Dendritic cell treated with granulocyte-macrophage colony-stimulating factor and Interleukin-4, amounts not matched to agents 40 ng/mL and 50 ng/mL, for 4 days (primary cell): ENCODE measurements at regions of chr19 and their contacts with region 1.

Region 1: GRCh38 chr19:6862673-6863078 is 24.7 kb upstream of the ADGRE1 start:
- H3K4me3 Mint-ChIP-seq: peak overlapping the region; percentile 56
- H3K27ac Mint-ChIP-seq: peak overlapping the region; percentile 78
- H3K4me1 Mint-ChIP-seq: peaks cover 29% of the 10 kb centered on the region
- H3K27me3 Mint-ChIP-seq: peaks cover 2% of the 10 kb centered on the region

Region 2: GRCh38 chr19:6516659-6517291 is 345.9 kb before region 1 on chr19:
- intact Hi-C with region 1: loop called (anchors 2 kb)
- H3K4me3 Mint-ChIP-seq: peak overlapping the region; percentile 87
- H3K27ac Mint-ChIP-seq: peak overlapping the region; percentile 85
- H3K4me1 Mint-ChIP-seq: peaks cover 39% of the 10 kb centered on the region
- H3K27me3 Mint-ChIP-seq: peaks cover 35% of the 10 kb centered on the region

Region 3: DNA sequence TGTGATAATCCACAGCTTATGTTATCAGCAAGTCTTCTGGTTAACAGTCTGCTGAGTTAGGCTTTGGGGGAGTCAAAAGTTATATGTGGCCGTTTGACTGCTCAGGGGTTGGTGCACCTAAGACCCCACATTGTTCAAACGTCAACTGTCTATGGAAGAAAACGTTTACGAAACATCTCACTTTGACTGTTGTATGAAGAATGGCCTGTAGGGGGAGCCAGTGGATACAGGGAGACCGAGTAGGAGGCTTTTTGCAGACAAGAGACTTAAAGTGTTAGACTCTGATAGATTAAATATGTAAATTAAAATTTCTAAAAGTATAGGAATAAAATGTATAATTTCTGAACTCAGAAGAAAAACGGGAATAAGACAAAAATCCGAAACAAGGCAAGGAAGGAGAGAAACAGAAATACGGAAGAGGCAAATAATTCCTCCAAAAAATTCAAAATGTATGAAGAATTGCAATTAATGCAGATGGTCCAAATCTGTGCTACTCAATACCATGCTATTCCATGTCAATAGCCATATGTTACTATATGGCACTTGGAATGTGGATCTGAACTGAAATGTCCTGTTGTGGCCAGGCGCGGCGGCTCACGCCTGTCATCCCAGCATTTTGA is 230.6 kb before region 1 on chr19:
- intact Hi-C with region 1: loop called (anchors 1 kb)
- H3K4me3 Mint-ChIP-seq: no peak overlapping the region
- H3K27ac Mint-ChIP-seq: no peak overlapping the region
- H3K4me1 Mint-ChIP-seq: peaks cover 9% of the 10 kb centered on the region
- H3K27me3 Mint-ChIP-seq: peaks cover 52% of the 10 kb centered on the region

Region 4: DNA sequence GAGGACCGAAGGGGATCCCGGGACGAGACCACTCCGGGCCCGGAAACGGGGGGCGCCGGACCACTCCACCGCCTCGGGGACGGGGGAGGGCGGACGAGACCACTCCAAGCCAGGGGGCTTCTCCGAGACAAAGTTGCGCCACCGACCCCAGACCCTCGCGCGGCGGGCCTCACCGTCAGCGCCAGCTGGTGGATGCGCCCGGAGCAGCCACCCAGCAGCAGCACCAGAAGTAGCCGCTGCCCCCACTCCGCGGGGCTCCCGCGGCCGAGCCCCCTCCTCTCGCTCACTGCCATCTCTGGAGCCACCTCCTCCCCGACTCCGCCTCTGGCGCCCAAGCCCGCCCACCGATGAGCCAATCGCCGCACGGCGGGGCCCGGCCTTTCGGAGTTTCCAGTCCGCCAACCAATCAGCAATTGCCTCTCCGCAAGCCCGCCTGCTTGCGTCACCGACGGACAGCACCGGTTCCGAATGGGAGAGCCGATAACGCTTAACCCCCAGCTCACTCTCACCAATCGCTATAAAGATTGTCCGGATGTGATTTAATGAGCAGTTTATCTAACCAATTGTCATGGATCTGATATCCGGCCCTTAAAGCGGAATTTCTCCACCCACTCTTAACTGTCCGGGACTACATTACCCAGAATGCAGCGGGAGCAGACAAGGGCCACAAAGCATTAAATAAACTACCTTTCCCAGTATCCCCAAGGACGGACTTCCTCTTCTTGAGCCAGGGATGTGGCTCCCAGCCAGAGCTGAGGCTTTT is 125.2 kb before region 1 on chr19 and contains the start of gene GPR108:
- intact Hi-C with region 1: loop called (anchors 1 kb)
- H3K4me3 Mint-ChIP-seq: peak within 1 kb of the TSS; percentile 94
- H3K27ac Mint-ChIP-seq: peak within 1 kb of the TSS; percentile 91
- H3K4me1 Mint-ChIP-seq: peaks cover 37% of the 10 kb centered on the region
- H3K27me3 Mint-ChIP-seq: peaks cover 2% of the 10 kb centered on the region

Region 5: GRCh38 chr19:6772028-6772865 is 90.4 kb before region 1 on chr19 and contains the start of gene VAV1:
- intact Hi-C with region 1: loop called (anchors 10 kb)
- H3K4me3 Mint-ChIP-seq: peak within 1 kb of the TSS; percentile 85
- H3K27ac Mint-ChIP-seq: peak within 1 kb of the TSS; percentile 80
- H3K4me1 Mint-ChIP-seq: peaks cover 69% of the 10 kb centered on the region
- H3K27me3 Mint-ChIP-seq: peaks cover 4% of the 10 kb centered on the region

Region 6: DNA sequence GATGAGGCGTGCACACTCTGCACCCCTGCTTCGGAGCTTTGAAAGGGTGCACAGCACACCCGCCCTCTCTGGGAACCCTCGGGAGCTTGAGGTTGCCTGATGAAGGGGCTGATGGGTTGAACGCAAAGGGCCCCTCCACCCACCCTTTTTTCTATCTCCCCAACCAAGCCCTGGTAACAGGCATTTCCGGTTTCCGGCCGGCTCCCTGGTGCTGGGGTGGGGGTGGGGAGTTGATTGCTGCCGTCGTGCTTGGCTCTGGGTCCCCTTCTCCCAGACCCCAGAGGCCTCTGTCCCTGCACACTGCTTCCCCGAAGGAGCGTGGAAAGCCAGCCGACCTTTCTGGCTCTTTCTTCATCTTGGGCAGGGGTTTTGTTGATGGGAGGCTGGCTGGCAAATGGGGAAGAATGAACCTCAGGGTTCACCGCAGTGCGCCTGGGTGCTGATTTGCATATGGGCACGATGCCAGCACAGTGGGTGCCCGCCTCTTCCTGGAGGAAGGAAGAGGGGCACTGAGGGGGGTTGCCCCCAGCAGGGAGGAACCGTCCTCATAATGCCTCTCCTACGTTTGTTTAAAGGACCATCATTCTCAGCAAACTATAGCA is 61.1 kb before region 1 on chr19:
- intact Hi-C with region 1: loop called (anchors 2 kb)
- H3K4me3 Mint-ChIP-seq: peak overlapping the region; percentile 78
- H3K27ac Mint-ChIP-seq: peak overlapping the region; percentile 96
- H3K4me1 Mint-ChIP-seq: peaks cover 81% of the 10 kb centered on the region
- H3K27me3 Mint-ChIP-seq: no peaks in the 10 kb centered on the region

Region 7: DNA sequence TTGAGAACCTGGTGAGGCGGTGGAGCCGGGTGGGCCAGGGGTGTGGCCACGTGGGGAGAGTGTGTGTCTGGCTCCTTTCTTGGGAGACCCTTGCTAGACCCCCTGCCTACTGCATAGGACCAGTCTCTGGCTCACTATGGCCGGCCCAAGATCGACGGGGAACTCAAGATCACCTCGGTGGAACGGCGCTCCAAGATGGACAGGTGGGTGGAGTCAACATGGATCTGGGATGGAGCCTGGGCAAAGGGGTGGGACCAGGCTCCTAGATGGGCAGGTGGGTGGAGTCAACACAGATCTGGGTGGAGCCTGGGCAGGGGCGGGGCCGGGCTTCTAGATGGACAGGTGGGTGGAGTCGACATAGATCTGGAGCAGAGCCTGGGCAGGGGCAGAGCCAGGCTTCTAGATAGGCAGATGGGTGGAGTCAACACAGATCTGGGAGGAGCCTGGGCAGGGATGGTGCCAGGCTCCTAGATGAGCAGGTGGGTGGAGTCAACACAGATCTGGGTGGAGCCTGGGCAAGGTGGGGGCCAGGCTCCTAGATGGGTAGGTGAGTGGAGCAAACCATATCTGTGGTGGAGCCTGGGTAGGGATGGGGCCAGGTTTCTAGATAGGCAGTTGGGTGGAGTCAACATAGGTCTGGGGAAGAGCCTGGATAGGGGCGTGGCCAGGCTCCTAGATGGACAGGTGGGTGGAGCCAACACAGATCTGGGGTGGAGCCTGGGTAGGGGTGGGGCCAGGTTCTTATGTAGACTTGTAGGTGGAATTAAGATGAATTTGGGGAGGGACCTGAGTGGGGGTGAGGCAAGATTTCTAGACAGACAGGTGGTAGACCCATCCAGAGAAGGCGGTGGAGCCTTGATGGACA is 33.7 kb before region 1 on chr19:
- intact Hi-C with region 1: no loop called
- H3K4me3 Mint-ChIP-seq: no peak overlapping the region
- H3K27ac Mint-ChIP-seq: no peak overlapping the region
- H3K4me1 Mint-ChIP-seq: peaks cover 43% of the 10 kb centered on the region
- H3K27me3 Mint-ChIP-seq: no peaks in the 10 kb centered on the region